ENCODE measurements at regions of chr1 and their contacts with region 1.

Region 1: DNA sequence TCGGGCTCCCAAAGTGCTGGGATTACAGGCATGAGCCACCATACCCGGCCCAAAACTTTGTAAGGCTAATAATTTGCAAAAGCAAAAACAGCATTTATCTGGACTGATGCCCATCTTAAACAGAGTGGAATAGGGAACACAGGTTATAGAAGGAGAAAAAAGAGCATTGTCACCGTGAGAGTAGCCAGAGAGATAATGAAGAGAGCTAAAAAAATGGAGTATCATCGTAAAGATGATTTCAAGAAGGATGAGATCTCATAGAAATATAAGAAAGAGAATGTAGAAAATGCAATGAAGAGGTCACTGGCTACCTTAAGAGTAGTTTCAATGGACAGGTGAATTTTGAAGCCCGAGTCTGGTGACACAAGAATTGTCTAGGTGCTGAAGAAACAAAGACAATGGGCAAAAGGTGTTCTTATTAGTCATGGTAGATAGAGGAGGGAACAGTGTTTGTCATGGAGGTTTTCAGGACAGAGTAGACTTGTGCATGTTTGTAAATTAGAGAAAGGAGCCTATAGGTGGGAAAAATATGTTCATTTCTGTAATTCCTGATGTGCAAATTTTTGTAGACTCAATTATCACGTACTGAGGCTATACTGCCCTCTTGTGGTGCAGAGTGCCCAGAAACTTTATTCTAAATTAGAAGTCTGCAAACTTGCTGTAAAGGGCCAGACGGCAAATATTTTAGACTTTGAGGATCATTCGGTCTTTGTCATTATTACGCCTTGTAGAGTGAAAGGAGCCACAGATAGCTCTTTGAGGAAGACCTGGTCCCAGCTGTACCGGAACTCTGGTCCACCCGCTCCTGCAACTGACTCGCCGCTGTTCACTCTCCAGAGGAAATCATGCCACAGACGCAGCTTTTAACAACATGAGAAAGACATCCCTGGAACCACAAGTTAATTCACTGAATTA is 8.1 kb upstream of the TMEM183A start:
- DNase-seq: no peak
- ATAC-seq: peak in 3 of 4 donors; percentile 40 to 72 (median 47)
- H3K4me3 ChIP-seq: peak overlapping the region; percentile 8
- H3K27ac ChIP-seq: no peak overlapping the region
- H3K4me1 ChIP-seq: no peaks in the 10 kb centered on the region
- H3K27me3 ChIP-seq: peaks cover 0 to 3% (median 0%) of the 10 kb centered on the region in 3 donors
- CTCF ChIP-seq: peak; percentile 84

Region 2: DNA sequence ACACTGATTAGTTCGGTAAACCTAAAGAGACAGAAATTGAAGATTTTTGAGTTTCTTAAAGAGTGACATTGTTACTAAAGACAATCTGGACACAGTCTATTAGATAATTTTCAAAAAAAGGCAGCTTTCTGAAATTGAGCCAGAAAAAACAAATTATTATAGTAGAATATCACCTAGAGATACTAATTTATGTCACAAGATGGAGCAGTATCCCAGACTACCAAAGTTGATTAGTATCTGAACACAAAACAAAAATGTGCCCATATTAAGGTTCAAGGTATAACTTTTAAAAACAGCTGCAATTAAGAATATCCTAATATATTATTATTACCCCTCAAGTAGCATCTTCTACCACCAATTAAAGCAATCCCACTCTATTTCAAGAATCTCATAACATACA is 248.3 kb before region 1 on chr1:
- intact Hi-C with region 1: loop called in 1 of 2 experiments (anchors 5 kb)
- DNase-seq: no peak
- ATAC-seq: no peak
- H3K4me3 ChIP-seq: no peak overlapping the region
- H3K27ac ChIP-seq: no peak overlapping the region
- H3K4me1 ChIP-seq: no peaks in the 10 kb centered on the region
- H3K27me3 ChIP-seq: no peaks in the 10 kb centered on the region
- CTCF ChIP-seq: peak; percentile 18

Region 3: GRCh38 chr1:202926720-202927491 is 72.2 kb before region 1 on chr1 and contains the start of gene KLHL12:
- intact Hi-C with region 1: loop called (anchors 1 to 2 kb)
- DNase-seq: peak; percentile 96 to 98
- ATAC-seq: peak; percentile 97 to 99 (median 98)
- H3K4me3 ChIP-seq: peak within 1 kb of the TSS; percentile 84
- H3K27ac ChIP-seq: peak within 1 kb of the TSS; percentile 92
- H3K4me1 ChIP-seq: peaks cover 32% of the 10 kb centered on the region
- H3K27me3 ChIP-seq: no peaks in the 10 kb centered on the region
- CTCF ChIP-seq: peak; percentile 73
- total RNA-seq, gene KLHL12: 14.3 to 19.8 (median 16.1) TPM